ENCODE measurements at regions of chr7 and their contacts with region 1.

Region 1: GRCh38 chr7:13639396-13639795 is 350.1 kb downstream of the ETV1 start:
- DNase-seq: no peak
- ATAC-seq: no peak
- H3K4me3 ChIP-seq: no peak overlapping the region
- H3K27ac ChIP-seq: no peak overlapping the region
- H3K4me1 ChIP-seq: no peaks in the 10 kb centered on the region
- H3K27me3 ChIP-seq: no peaks in the 10 kb centered on the region
- CTCF ChIP-seq: no peak
- POLR2A ChIP-seq: no peak

Region 2: DNA sequence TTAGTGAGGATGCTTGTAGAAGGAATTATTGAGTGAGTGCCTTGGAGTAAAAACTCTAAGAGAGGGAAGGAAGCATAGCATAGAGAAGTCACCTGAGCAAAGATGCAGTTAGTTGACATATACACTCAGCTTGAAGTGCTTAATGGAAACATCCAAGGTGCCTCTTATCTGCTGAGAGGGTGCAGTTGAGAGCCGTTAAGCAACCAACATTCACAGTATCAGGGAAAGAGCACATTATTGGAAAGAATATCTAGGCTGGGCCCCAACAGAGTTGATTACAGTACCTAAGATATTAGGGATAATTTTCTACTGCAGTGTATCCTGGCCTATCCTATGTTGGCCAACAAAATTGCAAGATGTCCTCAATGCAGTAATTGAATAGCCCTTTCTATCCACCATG is 48.1 kb after region 1 on chr7:
- in situ Hi-C with region 1: no loop called
- intact Hi-C with region 1: loop called (anchors 5 kb)
- DNase-seq: no peak
- ATAC-seq: no peak
- H3K4me3 ChIP-seq: no peak overlapping the region
- H3K27ac ChIP-seq: no peak overlapping the region
- H3K4me1 ChIP-seq: no peaks in the 10 kb centered on the region
- H3K27me3 ChIP-seq: no peaks in the 10 kb centered on the region
- CTCF ChIP-seq: no peak
- POLR2A ChIP-seq: no peak

Region 3: GRCh38 chr7:13860734-13861133 is 221.3 kb after region 1 on chr7:
- in situ Hi-C with region 1: no loop called
- intact Hi-C with region 1: no loop called
- DNase-seq: no peak
- ATAC-seq: no peak
- H3K4me3 ChIP-seq: no peak overlapping the region
- H3K27ac ChIP-seq: no peak overlapping the region
- H3K4me1 ChIP-seq: no peaks in the 10 kb centered on the region
- H3K27me3 ChIP-seq: no peaks in the 10 kb centered on the region
- CTCF ChIP-seq: no peak
- POLR2A ChIP-seq: no peak

Region 4: GRCh38 chr7:14799196-14799595 is 1159.8 kb after region 1 on chr7:
- in situ Hi-C with region 1: no loop called
- intact Hi-C with region 1: no loop called
- DNase-seq: no peak
- ATAC-seq: no peak
- H3K4me3 ChIP-seq: no peak overlapping the region
- H3K27ac ChIP-seq: no peak overlapping the region
- H3K4me1 ChIP-seq: no peaks in the 10 kb centered on the region
- H3K27me3 ChIP-seq: no peaks in the 10 kb centered on the region
- CTCF ChIP-seq: no peak
- POLR2A ChIP-seq: no peak

Measured in gastrocnemius medialis (tissue), 4 donors.